A673 (cell line): ENCODE measurements at regions of chr3 and their contacts with region 1.

Region 1: GRCh38 chr3:85821130-85821756 is 862.5 kb downstream of the CADM2 start:
- DNase-seq: peak; percentile 33
- H3K4me3 ChIP-seq: no peak overlapping the region
- H3K27ac ChIP-seq: no peak overlapping the region
- H3K4me1 ChIP-seq: no peaks in the 10 kb centered on the region
- H3K27me3 ChIP-seq: no peaks in the 10 kb centered on the region
- CTCF ChIP-seq: peak; percentile 68

Region 2: DNA sequence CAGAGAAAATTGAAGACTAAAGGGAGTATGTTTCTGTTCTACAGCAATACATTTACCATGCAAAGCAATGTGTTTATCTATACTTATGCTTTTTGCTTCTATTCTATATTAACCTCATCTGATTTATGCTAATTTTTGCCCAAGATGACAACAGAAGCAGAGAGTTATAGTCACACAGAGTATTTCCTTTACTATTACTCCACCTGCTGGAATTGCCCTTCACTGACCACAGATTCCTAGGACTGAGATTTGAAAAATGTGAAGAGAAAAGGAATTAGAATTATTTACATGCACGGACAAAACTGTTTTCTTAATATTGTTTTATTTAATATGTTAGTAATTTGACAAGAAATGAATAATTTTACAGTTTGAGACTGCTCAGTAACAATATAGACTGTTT is 424.1 kb after region 1 on chr3:
- CTCF ChIA-PET with region 1: no interaction called
- POLR2A ChIA-PET with region 1: no interaction called
- intact Hi-C with region 1: loop called (anchors 1 kb)
- DNase-seq: peak; percentile 19
- H3K4me3 ChIP-seq: no peak overlapping the region
- H3K27ac ChIP-seq: no peak overlapping the region
- H3K4me1 ChIP-seq: no peaks in the 10 kb centered on the region
- H3K27me3 ChIP-seq: no peaks in the 10 kb centered on the region
- CTCF ChIP-seq: peak; percentile 49

Region 3: DNA sequence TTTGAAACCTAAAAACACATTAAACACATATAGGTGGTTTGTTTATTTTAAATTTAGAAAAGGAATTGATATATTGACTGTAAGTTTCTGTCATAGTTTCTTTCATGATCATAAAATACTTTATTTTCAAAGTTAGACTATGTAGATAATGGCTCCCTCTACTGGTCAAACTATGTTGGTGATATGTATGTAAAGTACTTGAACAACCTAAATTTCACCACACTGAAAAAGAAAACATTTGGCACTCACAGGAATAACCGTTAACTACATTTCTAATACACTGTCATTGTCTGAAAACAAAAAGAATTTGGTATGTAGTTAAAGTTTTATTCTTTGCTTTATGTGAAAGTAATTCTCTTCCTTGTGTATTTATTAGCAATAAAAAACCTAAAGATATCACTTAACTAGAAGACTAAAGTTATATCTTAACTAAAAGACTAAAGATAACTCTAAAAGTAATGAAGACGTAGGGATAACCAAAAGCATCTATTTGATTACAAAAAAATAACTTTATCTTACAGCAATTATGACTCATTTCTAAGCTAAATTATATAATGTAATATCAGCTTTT is 742.2 kb after region 1 on chr3:
- CTCF ChIA-PET with region 1: no interaction called
- POLR2A ChIA-PET with region 1: no interaction called
- intact Hi-C with region 1: loop called (anchors 5 kb)
- DNase-seq: peak; percentile 64
- H3K4me3 ChIP-seq: no peak overlapping the region
- H3K27ac ChIP-seq: no peak overlapping the region
- H3K4me1 ChIP-seq: no peaks in the 10 kb centered on the region
- H3K27me3 ChIP-seq: no peaks in the 10 kb centered on the region
- CTCF ChIP-seq: peak; percentile 78